Lower leg skin (tissue), 4 donors: ENCODE measurements at regions of chr17 and their contacts with region 1.

Region 1: GRCh38 chr17:30212750-30213149 is 22.7 kb downstream of the SLC6A4 start:
- DNase-seq: peak in 1 of 2 donors; percentile 69
- H3K4me3 ChIP-seq: no peak overlapping the region
- CTCF ChIP-seq: no peak
- POLR2A ChIP-seq: no peak

Region 2: DNA sequence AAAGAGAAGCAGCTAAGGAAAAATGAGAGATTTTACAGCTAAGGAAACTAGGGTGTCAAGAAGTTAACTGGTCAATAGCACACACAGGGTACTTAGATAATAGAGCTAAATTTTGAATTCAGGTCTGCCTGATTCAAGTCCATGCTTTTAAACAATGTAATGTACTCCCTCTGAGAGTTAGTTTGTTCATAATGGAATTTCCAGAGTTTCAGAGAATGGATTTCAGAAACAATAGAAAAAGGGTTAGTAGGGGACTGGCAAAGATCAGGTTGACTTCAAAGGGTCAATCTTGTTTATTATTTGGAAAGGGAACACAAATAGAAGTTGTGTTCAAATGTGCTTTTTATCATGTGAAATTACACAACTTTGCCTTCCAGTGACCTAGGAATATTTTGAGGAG is 78.2 kb before region 1 on chr17:
- intact Hi-C with region 1: no loop called
- DNase-seq: no peak
- H3K4me3 ChIP-seq: no peak overlapping the region
- CTCF ChIP-seq: no peak
- POLR2A ChIP-seq: no peak

Region 3: DNA sequence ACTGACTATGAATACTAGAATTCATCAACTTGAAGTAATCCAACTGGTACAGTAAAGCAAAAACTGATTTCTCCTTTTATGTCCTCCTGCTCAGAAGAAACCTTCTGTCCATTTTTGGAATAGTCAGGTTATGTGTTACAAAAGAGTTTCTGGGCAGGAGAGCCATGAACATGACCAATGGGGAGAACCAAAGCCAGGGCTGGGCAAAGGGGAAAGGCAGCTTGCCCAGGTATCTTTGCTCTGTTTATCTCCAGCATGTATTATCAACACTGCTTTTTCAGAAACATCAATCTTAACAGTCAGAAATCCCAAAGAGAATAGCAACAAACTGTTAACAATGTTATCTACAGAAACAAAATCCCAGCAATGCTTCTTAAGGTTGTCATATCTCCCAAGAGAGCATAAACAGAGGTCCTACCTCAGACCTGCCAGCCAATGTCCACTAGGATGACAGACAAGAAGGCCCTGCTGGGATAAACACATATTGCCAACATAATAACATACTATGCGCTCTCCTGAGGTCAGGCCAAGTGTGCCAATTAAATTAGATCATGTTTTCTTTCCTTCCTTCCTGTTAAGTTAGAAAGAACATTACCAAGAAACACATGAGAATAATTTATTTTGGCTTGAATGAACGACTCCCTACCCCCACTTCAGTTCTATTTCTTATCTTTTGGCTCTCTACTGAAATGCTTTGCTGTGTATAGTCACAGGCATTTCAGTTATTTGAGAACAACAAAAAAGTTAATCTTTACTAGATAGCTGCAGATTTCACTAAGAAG is 51.0 kb after region 1 on chr17:
- intact Hi-C with region 1: loop called (anchors 2 kb)
- DNase-seq: no peak
- H3K4me3 ChIP-seq: no peak overlapping the region
- CTCF ChIP-seq: no peak
- POLR2A ChIP-seq: no peak